Left ventricle myocardium inferior (tissue), 1 donor: ENCODE measurements at regions of chr4 and their contacts with region 1.

Region 1: DNA sequence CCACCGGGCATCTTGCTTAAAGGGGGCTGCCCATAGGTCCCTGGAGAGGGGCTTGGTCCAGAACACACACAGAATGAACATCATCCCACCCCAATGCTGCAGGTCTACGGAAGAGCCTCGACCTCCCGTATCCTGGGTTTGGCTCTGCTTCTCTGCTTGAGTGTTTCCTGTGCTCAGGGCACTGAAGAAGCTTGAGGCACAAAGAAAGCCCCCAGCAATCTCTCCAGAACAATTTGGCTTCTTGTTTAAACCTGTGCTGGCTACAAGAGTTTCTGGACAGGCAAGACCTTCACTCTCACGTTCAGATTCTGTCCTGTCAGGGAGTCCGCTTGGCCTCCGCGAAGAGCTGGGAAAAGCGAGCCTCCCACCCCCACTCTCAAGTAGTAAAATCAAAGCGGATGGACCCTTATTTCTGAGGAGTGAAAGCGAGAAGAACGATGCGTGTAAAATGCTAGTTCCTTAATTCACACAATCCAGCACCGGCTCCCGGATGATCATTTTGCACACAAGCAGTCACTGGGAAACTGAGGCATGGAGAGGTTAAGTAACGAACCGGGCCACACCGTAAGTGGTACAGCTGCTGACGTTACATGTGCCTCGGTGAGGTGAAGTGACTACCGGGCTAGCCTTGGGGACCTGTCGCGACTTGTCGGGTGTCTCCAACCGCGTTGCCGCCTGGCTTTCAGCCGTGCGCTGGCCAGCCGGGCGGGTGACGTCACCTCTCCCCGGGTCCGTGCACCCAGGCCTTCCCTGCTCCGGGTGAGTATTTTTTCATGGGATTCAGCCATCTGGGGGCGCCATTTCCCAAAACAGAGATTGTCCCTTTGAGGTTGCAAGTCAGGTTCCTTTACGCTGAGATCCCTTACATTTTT is 3.1 kb upstream of the SFRP2 start:
- DNase-seq: no peak
- H3K4me3 ChIP-seq: peak overlapping the region; percentile 51
- H3K27ac ChIP-seq: no peak overlapping the region
- H3K4me1 ChIP-seq: peaks cover 36% of the 10 kb centered on the region
- H3K27me3 ChIP-seq: peaks cover 98% of the 10 kb centered on the region
- CTCF ChIP-seq: peak; percentile 37

Region 2: GRCh38 chr4:154024097-154024694 is 232.2 kb after region 1 on chr4:
- intact Hi-C with region 1: loop called (anchors 10 kb)
- DNase-seq: no peak
- H3K4me3 ChIP-seq: no peak overlapping the region
- H3K27ac ChIP-seq: no peak overlapping the region
- H3K4me1 ChIP-seq: no peaks in the 10 kb centered on the region
- H3K27me3 ChIP-seq: peaks cover 20% of the 10 kb centered on the region
- CTCF ChIP-seq: peak; percentile 38